Tibial artery (tissue), 4 donors: ENCODE measurements at regions of chr22 and their contacts with region 1.

Region 1: DNA sequence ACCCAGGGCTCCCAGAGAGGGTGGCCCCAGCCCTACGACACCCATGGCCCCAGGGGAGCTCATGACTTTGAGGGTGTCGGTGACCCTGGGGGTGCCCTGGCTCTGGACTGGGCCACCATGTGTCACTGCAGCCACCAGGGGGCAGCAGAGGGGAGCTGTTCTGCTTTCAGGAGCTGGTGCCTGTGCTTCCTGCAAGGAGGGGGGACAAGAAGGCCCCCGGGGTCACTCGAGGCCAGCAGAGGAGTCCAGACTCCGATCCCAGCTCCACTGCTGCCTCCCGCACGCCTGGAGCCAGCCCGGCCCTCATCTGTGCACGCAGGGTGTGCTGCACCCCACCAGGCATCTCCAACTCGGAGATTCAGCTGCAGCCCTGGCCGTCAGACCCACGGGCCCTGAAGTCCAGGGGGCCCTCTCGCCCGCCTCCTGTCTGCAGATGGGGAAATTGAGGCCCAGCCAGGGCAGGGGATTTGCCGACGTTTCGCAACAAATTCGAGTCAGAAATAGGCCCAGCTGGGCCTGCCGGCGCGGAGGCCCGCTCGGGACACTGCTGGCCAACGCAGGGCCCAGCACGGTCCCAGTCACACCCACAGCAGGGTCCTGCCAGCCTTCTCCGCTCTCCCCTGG is 29.5 kb upstream of the WNT7B start:
- DNase-seq: peak; percentile 91 to 96
- H3K4me3 ChIP-seq: peak overlapping the region in 1 of 2 donors; percentile 30
- H3K27ac ChIP-seq: peak overlapping the region; percentile 86 to 94
- H3K4me1 ChIP-seq: peaks cover 11 to 38% (median 28%) of the 10 kb centered on the region in 4 donors
- H3K27me3 ChIP-seq: no peaks in the 10 kb centered on the region
- CTCF ChIP-seq: peak; percentile 93 to 99

Region 2: DNA sequence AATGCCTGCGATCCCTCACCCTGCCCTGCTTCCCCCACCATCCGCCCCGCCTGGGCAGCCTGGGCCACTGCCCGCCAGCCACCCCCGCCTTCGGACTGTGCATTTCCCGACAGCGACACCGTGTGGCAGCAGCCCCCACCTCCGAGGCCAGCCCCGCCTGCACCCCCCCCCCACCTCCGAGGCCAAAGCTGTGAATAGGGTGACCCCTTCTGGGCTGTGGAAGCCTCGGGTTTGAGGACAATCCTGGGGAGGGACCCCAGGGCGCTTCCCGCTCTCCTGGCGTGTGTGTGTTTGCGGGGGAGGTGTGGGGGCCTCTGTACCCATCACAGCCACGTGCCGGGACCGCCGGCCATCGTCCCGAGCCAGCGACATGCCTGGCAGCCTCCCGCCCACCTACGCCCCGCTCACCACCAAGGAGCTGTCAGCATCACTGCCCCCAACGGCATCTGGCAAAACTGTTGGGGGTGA is 110.0 kb after region 1 on chr22:
- intact Hi-C with region 1: loop called (anchors 1 kb)
- DNase-seq: peak; percentile 94 to 97
- H3K4me3 ChIP-seq: no peak overlapping the region
- H3K27ac ChIP-seq: peak overlapping the region; percentile 75 to 78
- H3K4me1 ChIP-seq: peaks cover 0 to 65% (median 48%) of the 10 kb centered on the region in 4 donors
- H3K27me3 ChIP-seq: no peaks in the 10 kb centered on the region
- CTCF ChIP-seq: peak; percentile 92 to 95